B cell (primary cell): ENCODE measurements at regions of chr12 and their contacts with region 1.

Region 1: DNA sequence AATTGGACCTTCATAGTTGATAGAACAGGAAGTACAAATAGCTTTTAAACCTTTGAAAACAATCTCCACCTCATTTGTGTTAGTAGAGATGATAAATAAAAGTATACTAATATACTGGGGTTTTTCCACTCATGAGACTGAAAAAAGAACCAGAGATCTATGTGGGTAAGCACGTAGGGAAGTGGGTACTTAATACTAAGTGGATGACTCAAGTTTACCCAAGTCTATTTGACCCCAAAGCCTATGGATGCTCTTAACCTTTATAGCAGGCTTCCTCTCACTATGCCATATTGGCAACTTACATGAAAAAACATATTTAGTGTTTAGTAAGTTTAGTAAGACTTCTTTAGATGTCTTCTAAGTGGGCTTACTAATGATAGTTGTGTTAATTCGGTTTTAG is 49.2 kb upstream of the CHPT1 start:
- DNase-seq: no peak
- ATAC-seq: peak; percentile 58
- H3K4me3 ChIP-seq: no peak overlapping the region
- H3K4me3 Mint-ChIP-seq: no peak overlapping the region
- H3K27ac ChIP-seq: no peak overlapping the region
- H3K27ac Mint-ChIP-seq: no peak overlapping the region
- H3K4me1 ChIP-seq: no peaks in the 10 kb centered on the region
- H3K4me1 Mint-ChIP-seq: peaks cover 15% of the 10 kb centered on the region
- H3K27me3 ChIP-seq: no peaks in the 10 kb centered on the region
- H3K27me3 Mint-ChIP-seq: no peaks in the 10 kb centered on the region
- CTCF ChIP-seq: no peak

Region 2: GRCh38 chr12:100566887-100567637 is 1081.1 kb before region 1 on chr12:
- CTCF ChIA-PET with region 1: no interaction called
- POLR2A ChIA-PET with region 1: no interaction called
- intact Hi-C with region 1: no loop called
- DNase-seq: peak; percentile 7
- ATAC-seq: no peak
- H3K4me3 ChIP-seq: no peak overlapping the region
- H3K4me3 Mint-ChIP-seq: no peak overlapping the region
- H3K27ac ChIP-seq: no peak overlapping the region
- H3K27ac Mint-ChIP-seq: no peak overlapping the region
- H3K4me1 ChIP-seq: no peaks in the 10 kb centered on the region
- H3K4me1 Mint-ChIP-seq: no peaks in the 10 kb centered on the region
- H3K27me3 ChIP-seq: no peaks in the 10 kb centered on the region
- H3K27me3 Mint-ChIP-seq: peaks cover 6% of the 10 kb centered on the region
- CTCF ChIP-seq: no peak

Region 3: DNA sequence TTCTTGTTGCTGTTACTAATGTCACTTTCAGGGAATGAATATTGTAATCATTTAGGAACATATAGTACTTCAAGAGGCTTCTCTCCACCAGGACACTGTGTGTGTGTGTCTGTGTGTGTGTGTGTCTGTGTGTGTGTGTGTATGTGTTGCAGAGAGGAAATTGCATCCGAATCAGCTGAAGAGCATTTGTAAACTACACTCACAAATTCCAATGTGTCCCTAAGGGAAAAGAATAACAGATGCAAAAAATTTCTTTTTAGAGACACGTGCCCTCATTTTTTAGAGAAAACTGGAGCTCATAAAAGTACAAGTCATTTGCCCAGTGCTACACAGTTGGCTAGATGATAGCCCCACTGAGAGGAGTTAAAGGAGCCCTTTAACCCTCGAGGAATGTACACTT is 684.8 kb before region 1 on chr12:
- CTCF ChIA-PET with region 1: no interaction called
- POLR2A ChIA-PET with region 1: no interaction called
- intact Hi-C with region 1: no loop called
- DNase-seq: no peak
- ATAC-seq: no peak
- H3K4me3 ChIP-seq: no peak overlapping the region
- H3K4me3 Mint-ChIP-seq: no peak overlapping the region
- H3K27ac ChIP-seq: no peak overlapping the region
- H3K27ac Mint-ChIP-seq: no peak overlapping the region
- H3K4me1 ChIP-seq: no peaks in the 10 kb centered on the region
- H3K4me1 Mint-ChIP-seq: no peaks in the 10 kb centered on the region
- H3K27me3 ChIP-seq: no peaks in the 10 kb centered on the region
- H3K27me3 Mint-ChIP-seq: peaks cover 6% of the 10 kb centered on the region
- CTCF ChIP-seq: no peak

Region 4: DNA sequence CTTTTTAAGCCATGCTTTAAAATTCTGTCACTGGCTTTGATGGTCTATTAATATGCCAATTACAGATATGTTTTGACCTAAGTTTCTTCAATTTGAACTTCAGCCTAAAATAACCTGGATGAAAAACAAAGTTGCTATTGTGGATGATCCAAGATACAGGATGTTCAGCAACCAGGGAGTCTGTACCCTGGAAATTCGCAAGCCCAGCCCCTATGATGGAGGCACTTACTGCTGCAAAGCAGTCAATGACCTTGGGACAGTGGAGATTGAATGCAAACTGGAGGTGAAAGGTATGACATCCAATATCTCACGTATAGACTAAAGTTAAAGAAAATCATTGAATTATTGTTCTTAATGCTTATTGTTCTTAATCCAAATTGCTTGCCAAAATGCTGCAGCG is 32.0 kb after region 1 on chr12:
- CTCF ChIA-PET with region 1: interaction called, 3 read pairs
- POLR2A ChIA-PET with region 1: no interaction called
- intact Hi-C with region 1: loop called (anchors 5 kb)
- DNase-seq: no peak
- ATAC-seq: no peak
- H3K4me3 ChIP-seq: no peak overlapping the region
- H3K4me3 Mint-ChIP-seq: no peak overlapping the region
- H3K27ac ChIP-seq: no peak overlapping the region
- H3K27ac Mint-ChIP-seq: no peak overlapping the region
- H3K4me1 ChIP-seq: no peaks in the 10 kb centered on the region
- H3K4me1 Mint-ChIP-seq: peaks cover 3% of the 10 kb centered on the region
- H3K27me3 ChIP-seq: peaks cover 0 to under 1% (median 0%) of the 10 kb centered on the region in 4 experiments
- H3K27me3 Mint-ChIP-seq: peaks cover 3% of the 10 kb centered on the region
- CTCF ChIP-seq: no peak